PC-3 (cell line): ENCODE measurements at regions of chr16 and their contacts with region 1.

Region 1: DNA sequence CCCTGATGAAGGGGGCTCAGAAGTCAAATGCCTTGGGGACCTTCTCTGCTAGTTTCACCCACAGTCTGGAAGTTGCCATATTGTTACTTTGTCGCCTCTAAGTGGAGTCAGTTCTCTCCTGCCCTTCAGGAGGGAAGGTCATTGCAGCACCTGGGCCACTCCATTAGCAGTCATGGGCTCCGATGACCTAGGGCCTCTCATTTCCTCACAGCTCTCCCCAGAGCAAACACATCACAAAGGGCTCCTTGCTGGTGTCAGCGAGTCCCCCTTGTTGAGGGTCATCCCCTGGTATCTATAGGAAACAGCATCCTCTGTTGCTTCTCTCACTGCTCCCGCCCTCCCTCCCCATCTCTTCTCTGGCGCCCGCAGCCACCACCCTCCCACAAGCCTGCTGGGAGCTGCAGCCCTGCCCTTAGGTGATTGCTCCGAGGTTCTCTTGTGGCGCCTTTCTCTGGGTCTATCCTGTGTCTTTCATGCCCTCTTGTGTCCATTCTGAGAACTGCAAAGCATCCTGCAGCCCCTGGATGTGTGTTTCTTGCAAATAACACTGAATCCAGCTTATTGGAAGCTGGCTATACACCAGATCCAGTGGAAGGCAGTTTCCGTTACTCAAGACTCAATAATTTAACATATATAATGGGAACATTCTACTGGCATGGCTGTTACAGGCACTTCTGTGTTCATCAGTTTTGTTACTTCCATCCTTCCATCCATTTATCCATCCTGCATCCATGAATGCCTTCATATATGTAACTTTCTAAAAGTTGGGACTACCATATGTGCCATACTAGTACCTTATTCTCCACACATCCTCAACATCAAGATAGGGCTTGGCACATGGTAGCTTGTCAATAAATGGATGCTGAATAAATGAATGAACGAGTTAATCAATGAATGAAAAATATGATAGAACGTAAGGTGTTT is 21.2 kb downstream of the PDILT start:
- DNase-seq: peak; percentile 74
- ATAC-seq: peak; percentile 74
- H3K4me3 ChIP-seq: no peak overlapping the region
- H3K27ac ChIP-seq: no peak overlapping the region
- H3K4me1 ChIP-seq: no peaks in the 10 kb centered on the region
- H3K27me3 ChIP-seq: no peaks in the 10 kb centered on the region
- CTCF ChIP-seq: peak; percentile 69

Region 2: GRCh38 chr16:19898924-19899604 is 484.3 kb before region 1 on chr16:
- CTCF ChIA-PET with region 1: interaction called, 3 read pairs
- POLR2A ChIA-PET with region 1: no interaction called
- intact Hi-C with region 1: loop called (anchors 1 kb)
- DNase-seq: peak; percentile 69
- ATAC-seq: peak; percentile 71
- H3K4me3 ChIP-seq: no peak overlapping the region
- H3K27ac ChIP-seq: no peak overlapping the region
- H3K4me1 ChIP-seq: no peaks in the 10 kb centered on the region
- H3K27me3 ChIP-seq: no peaks in the 10 kb centered on the region
- CTCF ChIP-seq: peak; percentile 80

Region 3: GRCh38 chr16:20336955-20337354 is 46.4 kb before region 1 on chr16:
- CTCF ChIA-PET with region 1: no interaction called
- POLR2A ChIA-PET with region 1: no interaction called
- intact Hi-C with region 1: no loop called
- DNase-seq: no peak
- ATAC-seq: no peak
- H3K4me3 ChIP-seq: no peak overlapping the region
- H3K27ac ChIP-seq: no peak overlapping the region
- H3K4me1 ChIP-seq: no peaks in the 10 kb centered on the region
- H3K27me3 ChIP-seq: no peaks in the 10 kb centered on the region
- CTCF ChIP-seq: no peak